A673 (cell line): ENCODE measurements at regions of chr2 and their contacts with region 1.

Region 1: GRCh38 chr2:207625018-207625907 is at the start of gene METTL21A:
- DNase-seq: peak; percentile 94
- H3K4me3 ChIP-seq: peak within 1 kb of the TSS; percentile 78
- H3K27ac ChIP-seq: peak within 1 kb of the TSS; percentile 94
- H3K4me1 ChIP-seq: peaks cover 8% of the 10 kb centered on the region
- H3K27me3 ChIP-seq: no peaks in the 10 kb centered on the region
- CTCF ChIP-seq: peak; percentile 49; the same call in 1 of the 2 replicates
- total RNA-seq, gene METTL21A: 35.5 and 40.4 TPM in 2 replicates

Region 2: DNA sequence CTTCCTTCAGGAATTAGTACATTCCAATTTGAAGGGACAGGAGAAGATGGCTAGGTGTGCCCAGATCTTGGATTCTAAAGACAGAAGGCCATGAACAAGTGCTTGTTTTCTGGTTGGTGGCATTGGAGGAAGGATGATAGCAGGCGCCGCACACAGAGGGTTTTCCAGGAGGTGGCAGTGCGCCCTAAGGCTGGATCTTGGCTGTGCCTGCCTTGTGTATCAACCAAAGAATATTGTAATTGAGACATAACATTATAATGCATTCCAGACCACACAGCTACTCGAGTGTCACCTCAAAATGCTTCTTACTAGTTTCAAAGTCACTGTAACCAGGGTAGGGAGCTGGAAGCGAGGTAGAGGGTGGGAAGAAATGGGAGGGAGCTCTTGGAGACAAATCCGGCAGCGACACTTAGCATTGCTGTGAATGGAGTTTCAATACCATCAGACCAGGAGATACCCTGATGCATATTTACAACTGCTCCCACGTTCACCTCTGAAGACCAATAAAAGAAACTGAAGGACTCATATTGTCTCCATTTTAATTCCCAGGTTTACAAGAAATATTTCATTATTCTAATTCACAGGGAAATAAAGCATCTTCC is 643.4 kb before region 1 on chr2:
- CTCF ChIA-PET with region 1: no interaction called
- POLR2A ChIA-PET with region 1: no interaction called
- intact Hi-C with region 1: loop called (anchors 10 kb)
- DNase-seq: peak; percentile 65
- H3K4me3 ChIP-seq: no peak overlapping the region
- H3K27ac ChIP-seq: no peak overlapping the region
- H3K4me1 ChIP-seq: no peaks in the 10 kb centered on the region
- H3K27me3 ChIP-seq: peaks cover 38% of the 10 kb centered on the region
- CTCF ChIP-seq: peak; percentile 71

Region 3: GRCh38 chr2:207274530-207275189 is 350.6 kb before region 1 on chr2:
- CTCF ChIA-PET with region 1: no interaction called
- POLR2A ChIA-PET with region 1: no interaction called
- intact Hi-C with region 1: no loop called
- DNase-seq: no peak
- H3K4me3 ChIP-seq: no peak overlapping the region
- H3K27ac ChIP-seq: no peak overlapping the region
- H3K4me1 ChIP-seq: no peaks in the 10 kb centered on the region
- H3K27me3 ChIP-seq: no peaks in the 10 kb centered on the region
- CTCF ChIP-seq: no peak

Region 4: DNA sequence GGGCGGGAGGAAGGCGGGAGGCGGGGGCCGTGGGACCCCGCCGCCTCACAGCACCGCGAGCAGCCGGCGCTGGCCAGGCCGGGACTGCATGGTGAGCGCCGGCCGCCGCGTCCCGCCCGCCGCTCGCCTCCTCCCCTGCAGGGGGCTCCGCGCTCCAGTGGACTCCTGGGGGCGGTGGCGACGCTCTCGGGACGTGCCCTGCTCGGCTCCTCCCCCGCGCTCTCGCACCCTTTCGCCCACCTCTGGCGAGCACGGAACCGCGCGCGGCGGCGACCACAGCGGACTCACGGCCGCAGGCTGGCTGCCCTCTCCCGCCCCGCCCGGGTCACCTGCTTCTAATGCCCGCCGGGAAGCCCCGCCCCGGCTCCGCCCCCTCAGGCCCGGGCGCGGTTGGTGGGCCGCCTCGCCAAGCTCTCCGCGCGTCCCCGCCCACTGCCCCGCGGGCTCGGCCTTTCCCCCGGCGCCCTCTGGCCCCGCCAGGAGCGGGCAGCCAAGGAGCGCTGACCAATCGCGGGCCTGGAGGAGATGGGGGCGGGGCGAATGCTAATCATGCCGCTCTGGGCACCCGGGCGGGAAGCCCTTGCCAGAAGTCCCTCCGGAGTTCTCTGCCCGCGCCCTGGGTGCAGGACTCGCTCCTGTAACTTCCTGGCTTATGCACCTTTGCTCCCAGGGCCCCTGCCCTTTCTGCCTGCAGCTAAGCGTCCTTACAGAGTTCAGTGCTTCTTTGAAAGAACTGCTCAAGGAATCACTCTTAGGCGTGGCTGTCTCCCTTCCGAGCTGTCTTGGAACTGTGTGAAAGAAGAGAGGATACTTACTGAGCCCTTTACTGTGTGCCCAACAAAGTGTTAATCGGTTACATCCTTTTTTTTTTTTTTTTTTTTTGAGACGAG is 144.6 kb after region 1 on chr2 and contains the start of gene FZD5:
- CTCF ChIA-PET with region 1: no interaction called
- POLR2A ChIA-PET with region 1: no interaction called
- intact Hi-C with region 1: loop called (anchors 5 kb)
- DNase-seq: peak; percentile 72
- H3K4me3 ChIP-seq: peak within 1 kb of the TSS; percentile 65
- H3K27ac ChIP-seq: peak within 1 kb of the TSS; percentile 31
- H3K4me1 ChIP-seq: peaks cover 10% of the 10 kb centered on the region
- H3K27me3 ChIP-seq: no peaks in the 10 kb centered on the region
- CTCF ChIP-seq: peak; percentile 30
- total RNA-seq, gene FZD5: 0.86 and 1.8 TPM in 2 replicates

Region 5: GRCh38 chr2:208025037-208025813 is 400.0 kb after region 1 on chr2 and contains the start of gene PLEKHM3:
- CTCF ChIA-PET with region 1: no interaction called
- POLR2A ChIA-PET with region 1: no interaction called
- intact Hi-C with region 1: loop called (anchors 5 kb)
- DNase-seq: peak; percentile 90
- H3K4me3 ChIP-seq: peak within 1 kb of the TSS; percentile 75
- H3K27ac ChIP-seq: peak within 1 kb of the TSS; percentile 81
- H3K4me1 ChIP-seq: peaks cover 4% of the 10 kb centered on the region
- H3K27me3 ChIP-seq: no peaks in the 10 kb centered on the region
- CTCF ChIP-seq: no peak
- total RNA-seq, gene PLEKHM3: 6.5 TPM in 2 replicates

Region 6: DNA sequence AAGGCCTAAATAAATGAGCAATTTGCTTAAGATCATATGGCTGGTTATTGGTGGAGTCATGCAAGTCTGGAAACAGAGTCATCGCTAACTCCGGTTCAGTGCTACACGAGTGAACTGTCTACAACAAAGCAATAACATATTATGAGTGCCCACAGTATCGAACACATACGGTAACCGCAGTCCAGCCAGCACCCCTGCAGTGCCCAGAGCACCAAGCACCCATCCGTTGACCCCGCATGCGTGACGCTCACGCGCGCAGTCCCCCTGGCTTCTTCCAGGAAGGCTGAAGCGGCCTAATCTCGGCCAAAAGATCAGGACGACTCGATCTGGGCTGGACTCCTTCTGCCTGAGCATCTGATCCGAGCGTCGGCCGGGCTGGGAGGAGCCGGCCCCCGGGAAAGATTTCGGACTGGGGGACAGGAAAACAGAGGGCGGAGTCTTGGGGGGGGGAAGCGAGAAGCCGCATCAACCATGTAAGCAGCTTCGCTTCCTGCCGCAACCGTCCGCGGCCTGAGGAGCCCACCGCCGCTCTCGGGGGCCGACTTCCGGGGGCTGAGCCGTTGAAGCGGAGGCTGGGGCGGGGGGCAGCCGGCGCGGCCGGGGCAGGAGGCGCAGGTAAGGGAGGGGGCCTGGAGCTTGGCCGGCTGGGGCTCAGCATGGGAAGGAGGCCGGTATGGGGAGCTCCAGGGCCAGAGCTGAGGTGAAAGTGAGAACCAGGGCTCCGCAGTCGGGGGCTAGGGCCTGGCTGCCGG is 640.7 kb after region 1 on chr2 and contains the start of gene PIKFYVE:
- CTCF ChIA-PET with region 1: no interaction called
- POLR2A ChIA-PET with region 1: no interaction called
- intact Hi-C with region 1: loop called (anchors 10 kb)
- DNase-seq: peak; percentile 97
- H3K4me3 ChIP-seq: peak within 1 kb of the TSS; percentile 86
- H3K27ac ChIP-seq: peak within 1 kb of the TSS; percentile 89
- H3K4me1 ChIP-seq: peaks cover 17% of the 10 kb centered on the region
- H3K27me3 ChIP-seq: no peaks in the 10 kb centered on the region
- CTCF ChIP-seq: no peak
- total RNA-seq, gene PIKFYVE: 28.8 and 32.1 TPM in 2 replicates